Dendritic cell treated with granulocyte-macrophage colony-stimulating factor and Interleukin-4, amounts not matched to agents 40 ng/mL and 50 ng/mL, for 4 days (primary cell): ENCODE measurements at regions of chr11 and their contacts with region 1.

Region 1: GRCh38 chr11:121655537-121656327 is 203.0 kb upstream of the SORL1-AS1 start:
- H3K4me3 Mint-ChIP-seq: peak overlapping the region; percentile 76
- H3K27ac Mint-ChIP-seq: peak overlapping the region; percentile 85
- H3K4me1 Mint-ChIP-seq: peaks cover 14% of the 10 kb centered on the region
- H3K27me3 Mint-ChIP-seq: peaks cover 20% of the 10 kb centered on the region

Region 2: DNA sequence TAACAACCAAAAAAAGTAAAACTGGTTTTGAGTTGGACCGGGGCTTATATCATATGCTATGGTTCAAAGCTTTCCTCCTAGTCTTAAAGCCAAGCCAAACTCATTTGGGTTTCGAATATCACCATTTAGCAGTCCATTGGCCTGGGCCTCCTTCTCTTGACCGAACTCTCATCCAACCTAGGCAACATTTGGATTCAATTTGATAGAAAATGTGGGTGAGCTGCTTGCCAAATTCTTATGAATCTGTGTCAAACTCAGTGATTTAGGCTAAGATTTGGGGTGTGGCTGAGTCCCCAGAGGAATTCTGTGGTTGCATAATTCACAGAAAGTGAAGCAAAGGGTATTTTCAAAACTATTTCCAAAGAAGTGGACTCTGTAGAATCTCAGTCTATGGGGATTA is 376.6 kb after region 1 on chr11:
- intact Hi-C with region 1: no loop called
- H3K4me3 Mint-ChIP-seq: no peak overlapping the region
- H3K27ac Mint-ChIP-seq: no peak overlapping the region
- H3K4me1 Mint-ChIP-seq: no peaks in the 10 kb centered on the region
- H3K27me3 Mint-ChIP-seq: peaks cover 2% of the 10 kb centered on the region

Region 3: DNA sequence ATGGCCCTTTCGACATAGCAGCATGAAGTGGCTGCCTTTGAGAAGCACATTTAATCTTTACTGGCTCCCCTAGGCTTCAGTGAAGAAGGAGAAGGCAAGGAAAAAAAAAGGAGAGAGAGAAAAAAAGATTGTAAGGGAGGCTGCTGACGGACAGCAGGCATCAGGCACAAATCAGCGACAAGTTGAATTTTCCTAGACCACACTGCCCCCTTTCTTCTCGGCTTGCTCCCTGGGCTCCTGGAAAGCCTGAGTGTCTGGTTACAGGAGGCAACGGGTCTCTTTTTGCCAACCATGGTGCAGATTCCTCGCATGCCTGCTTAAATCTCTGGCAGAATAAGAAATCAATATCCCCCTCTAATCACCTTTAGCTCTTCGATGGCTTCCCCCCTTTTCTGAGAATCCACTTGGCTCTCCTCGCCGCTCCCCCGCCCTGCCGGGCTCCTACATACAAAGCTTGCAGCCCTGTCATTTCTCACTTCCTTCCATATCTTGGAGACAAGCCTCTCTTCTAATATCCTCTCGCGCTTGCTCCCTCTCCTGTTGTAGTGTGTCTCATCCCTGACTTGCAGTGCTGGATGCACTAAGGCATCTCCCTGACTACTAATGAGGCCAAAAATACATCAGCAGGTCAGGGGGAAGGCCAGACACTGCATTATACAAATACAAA is 446.0 kb after region 1 on chr11:
- intact Hi-C with region 1: loop called (anchors 5 kb)
- H3K4me3 Mint-ChIP-seq: no peak overlapping the region
- H3K27ac Mint-ChIP-seq: no peak overlapping the region
- H3K4me1 Mint-ChIP-seq: peaks cover 6% of the 10 kb centered on the region
- H3K27me3 Mint-ChIP-seq: peaks cover 47% of the 10 kb centered on the region

Region 4: GRCh38 chr11:122202951-122203456 is 547.3 kb after region 1 on chr11:
- intact Hi-C with region 1: loop called (anchors 1 kb)
- H3K4me3 Mint-ChIP-seq: no peak overlapping the region
- H3K27ac Mint-ChIP-seq: no peak overlapping the region
- H3K4me1 Mint-ChIP-seq: peaks cover 10% of the 10 kb centered on the region
- H3K27me3 Mint-ChIP-seq: peaks cover 26% of the 10 kb centered on the region